Posterior cingulate gyrus (tissue), 11 donors: ENCODE measurements at regions of chr17 and their contacts with region 1.

Region 1: GRCh38 chr17:29740017-29740416 is 117.3 kb upstream of the CORO6 start:
- DNase-seq: peak in 1 of 10 donors; percentile 23

Region 2: DNA sequence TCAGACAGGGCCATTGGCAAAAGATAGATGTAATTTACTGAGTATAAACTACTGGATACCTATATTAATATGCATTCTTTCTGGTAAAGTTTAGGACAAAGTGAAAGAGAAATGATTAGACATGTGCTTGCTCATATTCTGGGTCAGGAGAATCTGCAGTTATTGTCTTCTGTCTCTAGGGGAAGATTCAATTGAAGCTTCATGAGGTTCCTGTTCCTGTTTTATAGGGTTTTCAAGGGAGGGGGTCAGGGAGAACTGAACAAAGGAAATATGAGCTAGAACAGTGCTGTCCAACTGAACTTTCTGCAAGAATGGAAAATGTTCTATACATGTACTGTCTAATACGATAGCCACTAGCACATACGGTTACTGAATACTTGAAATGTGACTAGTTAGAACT is 58.0 kb before region 1 on chr17:
- intact Hi-C with region 1: loop called (anchors 10 kb)
- DNase-seq: no peak